Vagina (tissue), 2 donors: ENCODE measurements at regions of chr14 and their contacts with region 1.

Region 1: GRCh38 chr14:24408764-24409163 is 10.0 kb downstream of the NYNRIN start:
- DNase-seq: no peak
- H3K4me3 ChIP-seq: no peak overlapping the region
- H3K27ac ChIP-seq: no peak overlapping the region
- H3K4me1 ChIP-seq: peaks cover 23% of the 10 kb centered on the region
- H3K27me3 ChIP-seq: no peaks in the 10 kb centered on the region
- CTCF ChIP-seq: no peak
- POLR2A ChIP-seq: no peak

Region 2: GRCh38 chr14:23006544-23007419 is 1402.0 kb before region 1 on chr14:
- intact Hi-C with region 1: loop called (anchors 5 kb)
- DNase-seq: peak in 1 of 2 donors; percentile 99
- H3K4me3 ChIP-seq: peak overlapping the region; percentile 68 to 72
- H3K27ac ChIP-seq: peak overlapping the region; percentile 92
- H3K4me1 ChIP-seq: peaks cover 18% of the 10 kb centered on the region
- H3K27me3 ChIP-seq: no peaks in the 10 kb centered on the region
- CTCF ChIP-seq: no peak
- POLR2A ChIP-seq: peak in 1 of 2 donors; percentile 90

Region 3: DNA sequence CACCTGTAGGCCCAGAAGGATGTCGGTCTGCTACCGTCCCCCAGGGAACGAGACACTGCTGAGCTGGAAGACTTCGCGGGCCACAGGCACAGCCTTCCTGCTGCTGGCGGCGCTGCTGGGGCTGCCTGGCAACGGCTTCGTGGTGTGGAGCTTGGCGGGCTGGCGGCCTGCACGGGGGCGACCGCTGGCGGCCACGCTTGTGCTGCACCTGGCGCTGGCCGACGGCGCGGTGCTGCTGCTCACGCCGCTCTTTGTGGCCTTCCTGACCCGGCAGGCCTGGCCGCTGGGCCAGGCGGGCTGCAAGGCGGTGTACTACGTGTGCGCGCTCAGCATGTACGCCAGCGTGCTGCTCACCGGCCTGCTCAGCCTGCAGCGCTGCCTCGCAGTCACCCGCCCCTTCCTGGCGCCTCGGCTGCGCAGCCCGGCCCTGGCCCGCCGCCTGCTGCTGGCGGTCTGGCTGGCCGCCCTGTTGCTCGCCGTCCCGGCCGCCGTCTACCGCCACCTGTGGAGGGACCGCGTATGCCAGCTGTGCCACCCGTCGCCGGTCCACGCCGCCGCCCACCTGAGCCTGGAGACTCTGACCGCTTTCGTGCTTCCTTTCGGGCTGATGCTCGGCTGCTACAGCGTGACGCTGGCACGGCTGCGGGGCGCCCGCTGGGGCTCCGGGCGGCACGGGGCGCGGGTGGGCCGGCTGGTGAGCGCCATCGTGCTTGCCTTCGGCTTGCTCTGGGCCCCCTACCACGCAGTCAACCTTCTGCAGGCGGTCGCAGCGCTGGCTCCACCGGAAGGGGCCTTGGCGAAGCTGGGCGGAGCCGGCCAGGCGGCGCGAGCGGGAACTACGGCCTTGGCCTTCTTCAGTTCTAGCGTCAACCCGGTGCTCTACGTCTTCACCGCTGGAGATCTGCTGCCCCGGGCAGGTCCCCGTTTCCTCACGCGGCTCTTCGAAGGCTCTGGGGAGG is 97.8 kb before region 1 on chr14 and contains the start of gene LTB4R:
- intact Hi-C with region 1: no loop called
- DNase-seq: no peak
- H3K4me3 ChIP-seq: peak within 1 kb of the TSS; percentile 48 to 58
- H3K27ac ChIP-seq: peak within 1 kb of the TSS; percentile 87
- H3K4me1 ChIP-seq: peaks cover 80% of the 10 kb centered on the region
- H3K27me3 ChIP-seq: no peaks in the 10 kb centered on the region
- CTCF ChIP-seq: peak in 2 of 3 experiments; percentile 12 to 45
- POLR2A ChIP-seq: no peak
- total RNA-seq, gene LTB4R: 35.1 TPM